ENCODE measurements at regions of chr1 and their contacts with region 1.

Region 1: DNA sequence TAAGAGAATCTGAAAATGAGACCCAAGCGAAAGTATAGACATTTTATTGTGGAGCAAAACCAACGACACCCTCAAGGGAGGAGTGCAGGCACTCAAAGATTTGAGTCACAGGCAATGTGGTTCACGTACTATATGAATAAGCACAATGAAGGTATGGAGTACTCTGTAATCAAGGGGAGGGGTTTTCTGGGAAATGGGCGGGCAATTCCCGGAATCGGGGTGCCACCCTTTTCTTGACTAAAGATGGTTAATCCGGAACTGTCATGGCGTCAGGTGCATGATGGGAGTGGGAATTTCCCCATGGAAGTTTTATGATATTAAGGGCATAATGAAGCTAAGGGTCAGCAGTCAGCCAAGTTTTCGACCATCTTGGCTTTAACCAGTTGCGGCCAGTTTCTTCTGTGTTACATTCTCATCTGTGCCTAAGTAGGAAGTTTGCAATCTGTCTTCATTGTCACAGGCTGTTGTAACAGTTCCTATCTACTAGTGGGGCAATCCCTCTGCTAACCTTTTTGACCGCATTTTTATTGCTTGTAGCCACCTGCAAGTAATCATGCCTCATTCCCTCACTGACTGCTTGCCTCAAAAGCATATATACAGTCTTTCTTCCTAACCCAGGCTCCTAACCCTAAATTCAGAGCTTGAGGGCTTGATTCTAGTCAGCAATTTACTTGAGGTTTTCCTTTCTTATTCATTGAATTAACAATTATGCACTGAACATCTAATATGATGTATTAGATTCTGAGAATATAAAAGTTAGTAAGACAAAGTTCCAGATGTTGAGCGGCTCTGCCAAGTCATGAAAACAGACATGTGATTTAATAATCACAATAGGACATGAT is 775 bp upstream of the AIM2 start:
- DNase-seq: peak; percentile 52 to 95 (median 82)
- ATAC-seq: peak; percentile 79
- H3K4me3 ChIP-seq: peak overlapping the region; percentile 59
- H3K4me3 Mint-ChIP-seq: peak overlapping the region; percentile 62
- H3K27ac ChIP-seq: peak overlapping the region; percentile 47 to 92
- H3K27ac Mint-ChIP-seq: peak overlapping the region; percentile 92
- H3K4me1 ChIP-seq: peaks cover 21% of the 10 kb centered on the region
- H3K4me1 Mint-ChIP-seq: peaks cover 19% of the 10 kb centered on the region
- H3K27me3 ChIP-seq: no peaks in the 10 kb centered on the region
- H3K27me3 Mint-ChIP-seq: no peaks in the 10 kb centered on the region
- CTCF ChIP-seq: no peak

Region 2: GRCh38 chr1:159009704-159010361 is 67.5 kb before region 1 on chr1 and contains the start of gene IFI16:
- CTCF ChIA-PET with region 1: no interaction called
- POLR2A ChIA-PET with region 1: interaction called, 12 read pairs
- intact Hi-C with region 1: loop called in 1 of 2 experiments (anchors 5 kb)
- DNase-seq: peak in 11 of 14 experiments; percentile 22 to 92 (median 55)
- ATAC-seq: peak; percentile 81
- H3K4me3 ChIP-seq: peak within 1 kb of the TSS; percentile 69
- H3K4me3 Mint-ChIP-seq: peak within 1 kb of the TSS; percentile 98
- H3K27ac ChIP-seq: peak within 1 kb of the TSS; percentile 72 to 92
- H3K27ac Mint-ChIP-seq: peak within 1 kb of the TSS; percentile 96
- H3K4me1 ChIP-seq: peaks cover 28% of the 10 kb centered on the region
- H3K4me1 Mint-ChIP-seq: peaks cover 66% of the 10 kb centered on the region
- H3K27me3 ChIP-seq: no peaks in the 10 kb centered on the region
- H3K27me3 Mint-ChIP-seq: no peaks in the 10 kb centered on the region
- CTCF ChIP-seq: no peak
- total RNA-seq, gene IFI16: 36.9 to 37.6 TPM

Region 3: DNA sequence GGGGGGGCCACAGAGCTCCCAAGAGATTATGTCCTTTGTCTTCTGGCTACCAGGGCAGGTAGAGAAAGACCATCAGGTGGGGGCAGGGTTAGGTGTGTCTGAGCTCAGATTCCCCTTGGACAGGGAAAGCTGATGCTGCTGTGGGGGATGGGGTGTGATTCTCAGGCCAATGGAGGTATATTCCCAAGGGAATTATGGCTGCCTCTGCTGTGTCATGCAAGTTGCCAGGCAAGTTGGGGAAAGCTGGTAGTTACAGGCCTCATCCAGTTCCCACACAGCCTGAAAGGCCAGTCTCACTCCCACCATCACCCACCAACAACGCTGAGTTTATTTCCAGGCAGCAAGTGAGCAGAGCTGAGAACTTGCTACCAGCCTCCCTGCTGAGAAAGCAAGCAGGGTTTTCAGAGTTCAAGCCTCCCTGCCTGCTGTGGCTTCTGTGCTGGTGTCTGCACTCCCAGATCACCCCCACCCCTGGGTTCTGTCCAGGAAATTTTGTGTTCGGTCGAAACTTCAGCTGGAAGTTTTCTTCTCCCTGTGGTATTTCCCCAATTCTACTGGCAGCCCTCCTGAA is 46.4 kb before region 1 on chr1:
- CTCF ChIA-PET with region 1: no interaction called
- POLR2A ChIA-PET with region 1: no interaction called
- intact Hi-C with region 1: no loop called
- DNase-seq: no peak
- ATAC-seq: no peak
- H3K4me3 ChIP-seq: no peak overlapping the region
- H3K4me3 Mint-ChIP-seq: no peak overlapping the region
- H3K27ac ChIP-seq: no peak overlapping the region
- H3K27ac Mint-ChIP-seq: peak overlapping the region; percentile 43
- H3K4me1 ChIP-seq: peaks cover 17% of the 10 kb centered on the region
- H3K4me1 Mint-ChIP-seq: peaks cover 58% of the 10 kb centered on the region
- H3K27me3 ChIP-seq: no peaks in the 10 kb centered on the region
- H3K27me3 Mint-ChIP-seq: no peaks in the 10 kb centered on the region
- CTCF ChIP-seq: no peak

Region 4: GRCh38 chr1:159089184-159089791 is 11.9 kb after region 1 on chr1:
- CTCF ChIA-PET with region 1: interaction called, 17 read pairs
- POLR2A ChIA-PET with region 1: interaction called, 3 read pairs
- intact Hi-C with region 1: no loop called
- DNase-seq: peak in 4 of 14 experiments; percentile 32 to 70 (median 60)
- ATAC-seq: peak; percentile 51
- H3K4me3 ChIP-seq: no peak overlapping the region
- H3K4me3 Mint-ChIP-seq: no peak overlapping the region
- H3K27ac ChIP-seq: no peak overlapping the region
- H3K27ac Mint-ChIP-seq: no peak overlapping the region
- H3K4me1 ChIP-seq: peaks cover 6% of the 10 kb centered on the region
- H3K4me1 Mint-ChIP-seq: no peaks in the 10 kb centered on the region
- H3K27me3 ChIP-seq: no peaks in the 10 kb centered on the region
- H3K27me3 Mint-ChIP-seq: peaks cover 4% of the 10 kb centered on the region
- CTCF ChIP-seq: peak; percentile 75